ENCODE measurements at regions of chr13 and their contacts with region 1.

Region 1: GRCh38 chr13:21837841-21838551 is 167.1 kb downstream of the FGF9 start:
- DNase-seq: no peak
- H3K4me3 ChIP-seq: no peak overlapping the region
- H3K27ac ChIP-seq: no peak overlapping the region
- H3K4me1 ChIP-seq: peaks cover 0 to 12% (median 2%) of the 10 kb centered on the region in 4 donors
- H3K27me3 ChIP-seq: no peaks in the 10 kb centered on the region
- CTCF ChIP-seq: peak in 2 of 5 experiments; percentile 14 to 24
- EP300 ChIP-seq: no peak
- POLR2A ChIP-seq: no peak

Region 2: GRCh38 chr13:22757530-22758120 is 919.6 kb after region 1 on chr13:
- in situ Hi-C with region 1: no loop called
- intact Hi-C with region 1: loop called (anchors 5 kb)
- DNase-seq: no peak
- H3K4me3 ChIP-seq: no peak overlapping the region
- H3K27ac ChIP-seq: no peak overlapping the region
- H3K4me1 ChIP-seq: no peaks in the 10 kb centered on the region
- H3K27me3 ChIP-seq: no peaks in the 10 kb centered on the region
- CTCF ChIP-seq: peak in 2 of 5 experiments; percentile 17 to 30
- EP300 ChIP-seq: no peak
- POLR2A ChIP-seq: no peak

Measured in transverse colon (tissue), 4 donors.